ENCODE measurements at regions of chr20 and their contacts with region 1.

Region 1: DNA sequence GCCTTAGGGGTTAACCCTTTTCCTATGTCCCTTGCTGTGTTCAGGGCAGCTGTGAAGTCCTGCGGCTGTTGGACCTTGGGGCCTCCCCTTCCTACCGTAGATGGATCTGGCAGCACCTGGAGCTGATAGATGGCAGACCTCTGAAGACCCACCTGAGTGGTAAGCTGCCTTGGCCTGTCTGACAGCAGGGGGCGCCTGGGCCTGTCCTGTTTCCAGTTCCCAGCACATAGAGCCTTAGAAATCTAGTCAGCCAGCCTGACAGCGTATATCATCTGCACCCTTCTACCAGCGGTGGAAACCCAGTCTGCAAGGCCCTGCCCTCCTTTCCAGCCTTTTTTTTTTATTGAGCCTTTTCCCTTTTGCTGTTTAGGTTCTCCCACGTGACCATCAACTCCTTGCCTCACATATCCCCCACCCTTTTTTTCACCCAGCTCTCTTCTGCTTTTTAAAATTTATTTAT is 26.6 kb downstream of the CNBD2 start:
- DNase-seq: peak in 1 of 2 donors; percentile 88
- H3K4me3 ChIP-seq: no peak overlapping the region
- H3K27ac ChIP-seq: no peak overlapping the region
- H3K4me1 ChIP-seq: no peaks in the 10 kb centered on the region
- H3K27me3 ChIP-seq: no peaks in the 10 kb centered on the region
- CTCF ChIP-seq: peak; percentile 80 to 87 (median 81)

Region 2: DNA sequence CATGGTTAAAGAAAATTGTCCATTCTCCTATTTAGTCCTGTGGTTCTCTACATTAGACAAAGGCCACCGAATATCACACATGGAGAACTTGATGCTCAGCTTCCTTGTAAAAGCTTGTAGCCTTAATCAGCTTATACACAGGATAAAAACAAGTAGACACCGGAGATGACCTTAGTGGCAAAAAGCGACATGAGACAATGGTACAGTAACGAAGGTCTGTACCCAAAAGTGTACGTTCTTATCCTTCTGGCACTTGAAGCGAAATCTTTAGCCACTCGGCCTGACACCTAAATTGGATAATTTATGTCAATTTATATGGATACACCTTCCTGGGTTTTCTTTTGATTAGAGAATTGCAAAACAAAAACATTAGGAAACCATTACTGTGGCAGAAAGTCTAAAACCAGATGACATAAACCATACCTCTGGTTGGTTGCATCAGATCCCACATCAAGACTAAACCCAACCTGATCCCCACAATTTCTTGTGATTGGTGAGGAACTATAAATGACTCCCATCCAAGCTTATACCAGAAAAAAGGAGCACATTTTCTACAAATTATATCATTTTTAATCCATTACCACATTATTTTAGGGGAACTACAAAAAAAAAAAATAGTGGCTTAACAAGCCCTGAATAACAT is 259.1 kb before region 1 on chr20:
- intact Hi-C with region 1: no loop called
- DNase-seq: no peak
- H3K4me3 ChIP-seq: peak overlapping the region in 1 of 2 donors; percentile 19
- H3K27ac ChIP-seq: no peak overlapping the region
- H3K4me1 ChIP-seq: peaks cover 15 to 68% of the 10 kb centered on the region in 2 donors
- H3K27me3 ChIP-seq: no peaks in the 10 kb centered on the region
- CTCF ChIP-seq: no peak

Region 3: DNA sequence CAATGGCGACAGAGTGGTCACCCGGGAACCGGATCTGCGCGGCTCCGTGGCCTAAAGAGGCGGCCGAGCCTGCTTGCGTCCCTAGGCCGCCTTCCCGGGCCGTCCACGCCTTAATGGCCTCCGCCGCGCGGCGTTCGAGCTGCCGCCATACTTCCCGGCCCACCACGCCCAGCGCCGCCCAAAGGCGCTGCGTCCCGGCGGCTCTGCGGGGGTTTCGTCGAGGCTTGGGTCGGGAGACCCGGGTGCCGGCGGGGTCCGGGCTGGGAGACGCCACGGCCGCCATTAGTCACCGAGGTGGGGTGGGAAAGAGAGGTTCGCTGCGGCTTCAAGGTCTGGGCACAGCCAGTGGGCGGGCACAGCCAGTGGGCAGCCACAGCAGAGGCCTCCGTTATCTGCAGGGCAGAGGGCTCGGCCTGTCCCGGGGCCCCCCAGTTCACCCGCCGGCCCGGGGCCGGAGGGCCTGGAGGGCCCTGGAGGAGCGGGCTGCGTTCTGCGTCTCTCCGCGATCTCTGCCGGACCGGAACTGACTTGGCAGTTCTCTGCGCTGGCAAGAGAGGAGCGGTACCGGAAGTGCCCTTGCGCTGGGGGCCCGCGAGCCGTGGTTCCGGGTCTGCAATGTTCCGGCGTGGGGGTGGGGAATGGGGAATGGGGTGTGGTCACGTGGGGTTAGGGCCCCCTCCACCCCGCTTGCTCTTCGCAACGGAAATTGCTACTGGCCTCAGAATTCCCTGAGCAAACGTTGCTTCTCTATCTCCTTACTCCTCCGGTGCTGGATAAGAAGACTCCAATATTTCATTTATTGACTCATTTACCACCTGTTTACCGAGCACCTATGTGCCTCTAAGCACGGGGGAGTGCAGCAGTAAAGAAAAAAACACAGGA is 55.7 kb after region 1 on chr20:
- intact Hi-C with region 1: loop called (anchors 2 kb)
- DNase-seq: peak; percentile 62 to 93
- H3K4me3 ChIP-seq: peak overlapping the region; percentile 73 to 99
- H3K27ac ChIP-seq: peak overlapping the region; percentile 96 to 99
- H3K4me1 ChIP-seq: peaks cover 0 to 11% of the 10 kb centered on the region in 2 donors
- H3K27me3 ChIP-seq: no peaks in the 10 kb centered on the region
- CTCF ChIP-seq: no peak

Region 4: GRCh38 chr20:36132802-36133211 is 137.8 kb after region 1 on chr20:
- intact Hi-C with region 1: loop called (anchors 1 kb)
- DNase-seq: no peak
- H3K4me3 ChIP-seq: no peak overlapping the region
- H3K27ac ChIP-seq: no peak overlapping the region
- H3K4me1 ChIP-seq: no peaks in the 10 kb centered on the region
- H3K27me3 ChIP-seq: no peaks in the 10 kb centered on the region
- CTCF ChIP-seq: no peak